ENCODE measurements at regions of chr2 and their contacts with region 1.

Region 1: GRCh38 chr2:137050949-137051348 is 285.6 kb downstream of the THSD7B start:
- DNase-seq: peak; percentile 10
- H3K4me3 ChIP-seq: no peak overlapping the region
- H3K27ac ChIP-seq: no peak overlapping the region
- H3K4me1 ChIP-seq: no peaks in the 10 kb centered on the region
- H3K27me3 ChIP-seq: no peaks in the 10 kb centered on the region
- CTCF ChIP-seq: peak in 1 of 2 donors; percentile 8
- POLR2A ChIP-seq: no peak

Region 2: GRCh38 chr2:136932700-136933099 is 118.2 kb before region 1 on chr2:
- CTCF ChIA-PET with region 1: interaction called, 14 read pairs
- POLR2A ChIA-PET with region 1: no interaction called
- dilution Hi-C with region 1: no loop called
- intact Hi-C with region 1: loop called (anchors 1 kb)
- DNase-seq: peak; percentile 5
- H3K4me3 ChIP-seq: no peak overlapping the region
- H3K27ac ChIP-seq: no peak overlapping the region
- H3K4me1 ChIP-seq: no peaks in the 10 kb centered on the region
- H3K27me3 ChIP-seq: no peaks in the 10 kb centered on the region
- CTCF ChIP-seq: no peak
- POLR2A ChIP-seq: no peak